Ovary (tissue), 10 donors: ENCODE measurements at regions of chr13 and their contacts with region 1.

Region 1: DNA sequence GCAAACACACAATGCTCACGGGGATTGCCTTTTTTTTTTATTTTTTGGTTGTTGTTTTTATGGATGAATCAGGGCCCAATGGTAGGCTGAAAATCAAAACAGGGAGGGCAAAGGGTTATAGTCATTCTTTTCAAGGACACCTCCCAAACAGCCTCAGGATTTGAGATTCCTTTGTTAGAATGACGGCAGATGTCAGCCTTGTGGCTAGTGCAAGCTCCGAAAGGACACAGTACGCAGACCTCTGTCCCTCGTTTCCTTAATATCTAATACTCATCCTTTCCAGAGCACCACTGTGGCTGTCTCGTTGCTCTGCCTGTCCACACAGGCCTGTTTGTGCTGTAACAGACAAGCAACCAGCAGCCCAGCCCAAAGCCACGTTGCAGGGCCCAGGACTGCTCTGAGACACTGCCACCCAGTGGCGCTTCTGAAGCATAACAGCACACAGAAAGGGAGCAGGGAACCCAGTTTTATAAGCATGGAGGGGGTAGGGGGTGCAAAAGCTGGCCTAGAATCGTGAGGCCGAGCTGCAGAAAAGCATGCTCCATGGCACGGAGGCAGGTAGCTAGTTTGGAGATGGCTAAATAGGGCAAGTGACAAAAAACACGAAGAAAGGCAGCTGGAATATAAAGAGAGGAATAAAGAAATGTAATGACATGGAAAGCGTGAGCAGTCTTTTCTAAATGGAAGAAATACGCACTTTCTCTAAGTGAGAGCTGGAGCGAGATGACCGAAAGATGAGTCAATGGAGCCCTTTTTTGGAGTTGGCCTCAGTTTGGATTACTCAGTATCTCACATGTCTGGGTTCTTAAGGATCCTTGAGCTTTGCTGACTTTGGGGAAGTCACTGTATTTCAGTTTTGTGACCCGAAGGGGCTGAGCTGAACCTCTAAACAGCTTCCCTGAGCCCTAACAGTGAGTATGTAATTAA is 40.7 kb upstream of the MEDAG start:
- DNase-seq: peak; percentile 79 to 86 (median 81)
- H3K4me3 ChIP-seq: no peak overlapping the region
- H3K27ac ChIP-seq: peak overlapping the region; percentile 65 to 81
- H3K4me1 ChIP-seq: peaks cover 23% of the 10 kb centered on the region
- H3K27me3 ChIP-seq: no peaks in the 10 kb centered on the region
- CTCF ChIP-seq: peak; percentile 77 to 92 (median 92)
- EP300 ChIP-seq: no peak
- POLR2A ChIP-seq: peak; percentile 20

Region 2: GRCh38 chr13:30453727-30454126 is 411.7 kb before region 1 on chr13:
- intact Hi-C with region 1: loop called in 1 of 4 experiments (anchors 10 kb)
- DNase-seq: no peak
- H3K4me3 ChIP-seq: no peak overlapping the region
- H3K27ac ChIP-seq: no peak overlapping the region
- H3K4me1 ChIP-seq: no peaks in the 10 kb centered on the region
- H3K27me3 ChIP-seq: no peaks in the 10 kb centered on the region
- CTCF ChIP-seq: no peak
- EP300 ChIP-seq: no peak
- POLR2A ChIP-seq: no peak

Region 3: GRCh38 chr13:30465585-30466357 is 399.6 kb before region 1 on chr13 and contains the start of gene HMGB1:
- intact Hi-C with region 1: loop called in 1 of 4 experiments (anchors 5 kb)
- DNase-seq: peak; percentile 97 to 98 (median 97)
- H3K4me3 ChIP-seq: peak within 1 kb of the TSS; percentile 93
- H3K27ac ChIP-seq: peak within 1 kb of the TSS; percentile 99 to 100
- H3K4me1 ChIP-seq: peaks cover 1% of the 10 kb centered on the region
- H3K27me3 ChIP-seq: no peaks in the 10 kb centered on the region
- CTCF ChIP-seq: no peak
- EP300 ChIP-seq: no peak
- POLR2A ChIP-seq: peak; percentile 98
- total RNA-seq, gene HMGB1: 163 to 283 (median 240) TPM

Region 4: GRCh38 chr13:30617315-30618185 is 247.8 kb before region 1 on chr13 and contains the start of gene USPL1:
- intact Hi-C with region 1: loop called in 1 of 4 experiments (anchors 5 kb)
- DNase-seq: peak; percentile 96 to 98 (median 98)
- H3K4me3 ChIP-seq: peak within 1 kb of the TSS; percentile 88
- H3K27ac ChIP-seq: peak within 1 kb of the TSS; percentile 99 to 100
- H3K4me1 ChIP-seq: peaks cover 2% of the 10 kb centered on the region
- H3K27me3 ChIP-seq: no peaks in the 10 kb centered on the region
- CTCF ChIP-seq: peak; percentile 34 to 90 (median 80)
- EP300 ChIP-seq: peak; percentile 84
- POLR2A ChIP-seq: peak; percentile 86
- total RNA-seq, gene USPL1: 19.4 to 26.8 (median 22.4) TPM

Region 5: GRCh38 chr13:30739761-30740642 is 125.4 kb before region 1 on chr13:
- intact Hi-C with region 1: no loop called
- DNase-seq: no peak
- H3K4me3 ChIP-seq: no peak overlapping the region
- H3K27ac ChIP-seq: peak overlapping the region in 1 of 2 donors; percentile 28
- H3K4me1 ChIP-seq: peaks cover 12% of the 10 kb centered on the region
- H3K27me3 ChIP-seq: no peaks in the 10 kb centered on the region
- CTCF ChIP-seq: no peak
- EP300 ChIP-seq: no peak
- POLR2A ChIP-seq: no peak

Region 6: GRCh38 chr13:30792285-30793000 is 72.9 kb before region 1 on chr13:
- intact Hi-C with region 1: loop called in 1 of 4 experiments (anchors 5 kb)
- DNase-seq: peak; percentile 75 to 90 (median 81)
- H3K4me3 ChIP-seq: no peak overlapping the region
- H3K27ac ChIP-seq: no peak overlapping the region
- H3K4me1 ChIP-seq: peaks cover 2% of the 10 kb centered on the region
- H3K27me3 ChIP-seq: no peaks in the 10 kb centered on the region
- CTCF ChIP-seq: peak in 2 of 3 donors; percentile 35 to 48
- EP300 ChIP-seq: no peak
- POLR2A ChIP-seq: no peak

Region 7: GRCh38 chr13:30802953-30803478 is 62.4 kb before region 1 on chr13:
- intact Hi-C with region 1: loop called in 2 of 4 experiments (anchors 5 kb)
- DNase-seq: peak; percentile 84 to 91 (median 86)
- H3K4me3 ChIP-seq: peak overlapping the region; percentile 35
- H3K27ac ChIP-seq: no peak overlapping the region
- H3K4me1 ChIP-seq: peaks cover 4% of the 10 kb centered on the region
- H3K27me3 ChIP-seq: no peaks in the 10 kb centered on the region
- CTCF ChIP-seq: peak; percentile 84 to 92 (median 86)
- EP300 ChIP-seq: no peak
- POLR2A ChIP-seq: no peak

Region 8: DNA sequence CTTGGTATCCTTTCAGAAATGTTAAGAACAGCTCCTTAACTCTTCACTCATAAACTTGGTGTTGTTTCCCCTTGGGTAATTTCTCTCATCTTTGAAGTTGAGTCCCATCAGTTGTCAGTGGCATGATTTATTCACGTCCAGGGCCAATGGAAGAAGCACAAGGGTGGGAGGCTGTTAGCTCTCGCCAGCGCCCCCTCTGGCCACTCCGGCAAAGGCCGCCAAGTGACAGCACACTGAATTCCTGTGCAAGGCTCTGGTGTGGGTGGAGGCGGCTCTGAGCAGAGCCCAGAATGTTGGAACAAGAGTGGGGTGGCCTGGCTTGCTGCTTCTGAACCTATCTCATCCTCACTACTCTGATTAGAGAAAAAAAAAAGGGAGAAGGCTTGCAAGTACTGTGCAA is 27.6 kb after region 1 on chr13:
- intact Hi-C with region 1: no loop called
- DNase-seq: peak in 2 of 5 donors; percentile 47 to 53
- H3K4me3 ChIP-seq: no peak overlapping the region
- H3K27ac ChIP-seq: no peak overlapping the region
- H3K4me1 ChIP-seq: no peaks in the 10 kb centered on the region
- H3K27me3 ChIP-seq: no peaks in the 10 kb centered on the region
- CTCF ChIP-seq: no peak
- EP300 ChIP-seq: no peak
- POLR2A ChIP-seq: no peak